IMR-90 (cell line): ENCODE measurements at regions of chr11 and their contacts with region 1.

Region 1: DNA sequence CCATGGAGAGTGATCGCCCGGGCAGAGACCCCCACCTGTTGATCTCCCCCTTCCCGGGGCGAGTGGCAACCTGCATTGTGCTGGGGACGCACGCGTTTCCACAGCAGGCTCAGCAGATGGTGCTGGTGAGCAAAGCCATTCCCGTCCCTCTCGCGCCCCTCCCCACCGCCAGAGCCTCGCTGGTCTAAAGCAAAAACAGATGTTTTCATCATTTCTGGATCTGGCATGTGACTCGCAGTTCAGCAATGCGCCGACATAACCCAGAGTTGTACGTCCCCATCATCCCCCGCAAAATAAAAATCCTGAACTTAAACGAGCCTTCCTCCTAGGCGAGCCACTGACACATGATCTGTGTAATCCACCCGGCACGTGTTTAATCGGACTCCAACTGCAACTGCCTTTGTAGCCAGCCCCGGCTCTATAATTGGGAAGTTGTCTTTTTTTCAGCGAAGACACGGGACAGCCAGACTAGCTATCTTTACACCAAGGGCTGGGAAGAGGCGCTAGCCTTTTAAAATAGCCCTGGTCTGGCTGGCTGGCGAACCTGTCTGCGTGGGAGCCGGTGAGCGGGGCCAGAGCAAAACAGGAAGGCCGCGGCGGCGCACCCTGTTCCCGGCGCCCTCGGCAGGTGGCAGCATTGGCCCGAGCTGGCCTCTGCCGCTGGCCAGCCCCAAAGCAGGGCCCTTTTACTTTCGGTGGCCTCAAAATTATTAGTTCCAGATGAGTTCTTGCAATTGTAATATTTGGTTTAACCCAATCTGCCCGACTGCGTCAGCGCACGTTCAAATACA is 203.0 kb upstream of the SORL1-AS1 start:
- DNase-seq: peak; percentile 99
- ATAC-seq: peak; percentile 88
- H3K4me3 ChIP-seq: peak overlapping the region; percentile 28
- H3K27ac ChIP-seq: peak overlapping the region; percentile 97
- H3K4me1 ChIP-seq: peaks cover 28% of the 10 kb centered on the region
- H3K27me3 ChIP-seq: no peaks in the 10 kb centered on the region
- CTCF ChIP-seq: peak; percentile 97
- POLR2A ChIP-seq: peak; percentile 64; the same call in 1 of the 2 replicates
- RAD21 ChIP-seq: peak; percentile 99

Region 2: GRCh38 chr11:121318848-121319834 is 336.6 kb before region 1 on chr11:
- CTCF ChIA-PET with region 1: no interaction called
- POLR2A ChIA-PET with region 1: no interaction called
- dilution Hi-C with region 1: no loop called
- in situ Hi-C with region 1: no loop called
- intact Hi-C with region 1: loop called (anchors 1 kb)
- DNase-seq: peak; percentile 56
- ATAC-seq: peak; percentile 89
- H3K4me3 ChIP-seq: no peak overlapping the region
- H3K27ac ChIP-seq: no peak overlapping the region
- H3K4me1 ChIP-seq: no peaks in the 10 kb centered on the region
- H3K27me3 ChIP-seq: peaks cover 12% of the 10 kb centered on the region
- CTCF ChIP-seq: peak; percentile 73
- POLR2A ChIP-seq: no peak
- RAD21 ChIP-seq: peak; percentile 65

Region 3: DNA sequence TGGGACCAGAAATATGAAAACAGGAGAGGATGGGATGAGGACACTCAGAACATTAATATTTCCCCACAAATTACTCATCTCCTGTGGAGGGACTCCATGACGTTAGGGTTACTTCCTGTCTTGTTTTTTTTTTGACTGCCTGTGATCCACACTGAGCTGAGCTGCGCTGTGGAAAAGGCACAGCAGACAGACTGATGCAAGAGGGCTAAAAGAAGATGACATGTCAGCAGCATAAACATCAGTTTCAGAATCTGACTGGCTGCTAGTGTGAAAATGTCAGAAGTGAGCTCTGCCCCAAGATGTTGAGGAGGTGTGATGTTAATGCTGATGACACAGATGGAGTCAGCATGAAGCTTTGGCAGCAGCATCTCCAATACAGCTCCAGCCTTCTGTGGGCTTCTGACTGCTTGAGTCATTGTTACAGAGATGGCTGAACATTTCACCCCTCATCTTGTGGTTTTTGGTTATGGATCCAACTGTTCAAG is 173.5 kb after region 1 on chr11:
- CTCF ChIA-PET with region 1: interaction called, 5 read pairs
- POLR2A ChIA-PET with region 1: no interaction called
- dilution Hi-C with region 1: no loop called
- in situ Hi-C with region 1: no loop called
- intact Hi-C with region 1: loop called (anchors 2 kb)
- DNase-seq: peak; percentile 100
- ATAC-seq: peak; percentile 95
- H3K4me3 ChIP-seq: no peak overlapping the region; the same call in 1 of the 2 replicates
- H3K27ac ChIP-seq: peak overlapping the region; percentile 19
- H3K4me1 ChIP-seq: no peaks in the 10 kb centered on the region
- H3K27me3 ChIP-seq: no peaks in the 10 kb centered on the region
- CTCF ChIP-seq: no peak
- POLR2A ChIP-seq: peak; percentile 35; the same call in 1 of the 2 replicates
- RAD21 ChIP-seq: peak; percentile 38

Region 4: DNA sequence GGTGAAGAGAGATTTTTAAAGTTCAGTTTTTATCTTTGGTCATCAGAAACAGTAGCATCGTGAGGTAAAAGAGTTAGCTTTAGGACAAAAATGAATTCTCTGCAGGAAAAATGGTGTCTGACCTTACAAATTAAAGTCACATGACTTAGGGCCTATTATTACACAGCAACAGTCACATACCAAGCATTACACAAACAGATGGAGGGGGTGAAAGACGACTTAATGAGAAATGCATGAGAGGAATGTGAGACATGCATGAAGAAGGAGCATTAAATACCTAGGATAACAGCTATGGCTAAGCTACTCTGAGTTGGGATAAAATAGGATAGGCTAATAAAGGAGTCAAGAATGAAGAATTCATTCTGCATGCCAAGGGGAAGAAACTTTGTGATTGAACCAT is 382.8 kb after region 1 on chr11:
- CTCF ChIA-PET with region 1: interaction called, 3 read pairs
- POLR2A ChIA-PET with region 1: no interaction called
- dilution Hi-C with region 1: no loop called
- in situ Hi-C with region 1: loop called (anchors 10 kb)
- intact Hi-C with region 1: loop called (anchors 2 kb)
- DNase-seq: peak; percentile 93
- ATAC-seq: peak; percentile 82
- H3K4me3 ChIP-seq: no peak overlapping the region
- H3K27ac ChIP-seq: peak overlapping the region; percentile 36; the same call in 1 of the 2 replicates
- H3K4me1 ChIP-seq: peaks cover 23% of the 10 kb centered on the region
- H3K27me3 ChIP-seq: no peaks in the 10 kb centered on the region
- CTCF ChIP-seq: no peak
- POLR2A ChIP-seq: no peak
- RAD21 ChIP-seq: no peak

Region 5: DNA sequence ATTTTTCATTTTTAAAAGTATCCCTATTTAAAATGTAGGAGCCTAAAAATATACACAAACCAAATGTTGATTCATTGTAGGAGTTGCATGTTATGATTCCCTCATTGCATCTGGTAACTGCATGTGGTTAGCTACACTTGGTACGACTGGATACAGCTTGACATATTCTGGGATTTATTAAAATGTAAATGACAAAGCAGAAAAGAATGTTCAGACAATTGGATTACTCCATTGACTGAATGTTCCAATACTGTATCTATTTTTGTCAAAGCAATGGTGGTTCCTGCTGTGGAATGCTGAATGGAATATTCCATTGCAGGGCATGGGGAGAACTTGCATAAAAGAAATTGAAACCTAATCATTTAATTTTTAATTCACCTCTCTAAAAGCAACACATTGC is 429.5 kb after region 1 on chr11:
- CTCF ChIA-PET with region 1: no interaction called
- POLR2A ChIA-PET with region 1: no interaction called
- dilution Hi-C with region 1: no loop called
- in situ Hi-C with region 1: no loop called
- intact Hi-C with region 1: loop called (anchors 1 kb)
- DNase-seq: peak; percentile 95
- ATAC-seq: peak; percentile 42
- H3K4me3 ChIP-seq: no peak overlapping the region
- H3K27ac ChIP-seq: no peak overlapping the region
- H3K4me1 ChIP-seq: peaks cover 11% of the 10 kb centered on the region
- H3K27me3 ChIP-seq: no peaks in the 10 kb centered on the region
- CTCF ChIP-seq: no peak
- POLR2A ChIP-seq: no peak
- RAD21 ChIP-seq: no peak

Region 6: GRCh38 chr11:122202951-122203456 is 547.3 kb after region 1 on chr11:
- CTCF ChIA-PET with region 1: interaction called, 5 read pairs
- POLR2A ChIA-PET with region 1: no interaction called
- dilution Hi-C with region 1: no loop called
- in situ Hi-C with region 1: loop called (anchors 5 kb)
- intact Hi-C with region 1: loop called (anchors 1 kb)
- DNase-seq: peak; percentile 71
- ATAC-seq: peak; percentile 73
- H3K4me3 ChIP-seq: peak overlapping the region; percentile 54
- H3K27ac ChIP-seq: peak overlapping the region; percentile 98
- H3K4me1 ChIP-seq: peaks cover 40% of the 10 kb centered on the region
- H3K27me3 ChIP-seq: no peaks in the 10 kb centered on the region
- CTCF ChIP-seq: peak; percentile 95
- POLR2A ChIP-seq: 0 out of 2 replicates have a peak, but pooled peaks have one; percentile 40
- RAD21 ChIP-seq: peak; percentile 95

Region 7: GRCh38 chr11:122209619-122210366 is 554.1 kb after region 1 on chr11:
- CTCF ChIA-PET with region 1: interaction called, 4 read pairs
- POLR2A ChIA-PET with region 1: no interaction called
- dilution Hi-C with region 1: no loop called
- in situ Hi-C with region 1: loop called (anchors 5 kb)
- intact Hi-C with region 1: no loop called
- DNase-seq: peak; percentile 88
- ATAC-seq: peak; percentile 4
- H3K4me3 ChIP-seq: no peak overlapping the region
- H3K27ac ChIP-seq: peak overlapping the region; percentile 96
- H3K4me1 ChIP-seq: peaks cover 51% of the 10 kb centered on the region
- H3K27me3 ChIP-seq: no peaks in the 10 kb centered on the region
- CTCF ChIP-seq: no peak
- POLR2A ChIP-seq: no peak
- RAD21 ChIP-seq: no peak